Sigmoid colon (tissue), 7 donors: ENCODE measurements at regions of chr1 and their contacts with region 1.

Region 1: DNA sequence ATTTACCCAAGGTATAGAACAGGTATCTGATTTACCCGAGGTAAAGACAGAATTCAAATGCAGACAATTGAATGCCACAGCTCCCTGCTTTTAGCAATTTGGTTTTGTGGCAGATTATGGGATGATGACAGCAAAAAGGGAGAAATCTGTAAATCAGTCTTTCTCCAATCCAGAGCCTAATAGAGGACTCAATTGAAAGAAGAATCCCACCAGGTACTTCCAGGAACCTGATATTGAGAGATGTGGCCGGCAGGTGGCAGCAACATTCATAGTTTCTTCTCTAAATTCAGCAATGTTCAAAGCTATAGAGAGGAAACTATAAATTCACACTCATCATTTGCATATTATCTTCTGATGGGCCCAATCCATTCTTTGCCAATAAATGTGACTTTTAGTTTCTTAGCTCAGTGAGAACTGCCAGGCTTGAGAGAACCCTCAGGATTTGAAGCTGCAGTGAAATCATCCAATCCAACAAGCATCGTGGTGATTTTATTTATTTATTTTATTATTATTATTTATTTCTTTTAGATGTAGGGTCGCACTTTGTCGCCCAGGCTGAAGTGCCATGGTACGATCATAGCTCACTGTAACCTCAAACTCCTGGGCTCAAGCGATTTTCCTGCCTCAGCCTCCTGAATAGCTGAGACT is 9.8 kb upstream of the PHACTR4 start:
- DNase-seq: peak; percentile 75
- H3K4me3 ChIP-seq: no peak overlapping the region
- H3K27ac ChIP-seq: no peak overlapping the region
- H3K4me1 ChIP-seq: no peaks in the 10 kb centered on the region
- H3K27me3 ChIP-seq: no peaks in the 10 kb centered on the region
- CTCF ChIP-seq: peak; percentile 4 to 61 (median 43)
- EP300 ChIP-seq: no peak
- POLR2A ChIP-seq: no peak

Region 2: DNA sequence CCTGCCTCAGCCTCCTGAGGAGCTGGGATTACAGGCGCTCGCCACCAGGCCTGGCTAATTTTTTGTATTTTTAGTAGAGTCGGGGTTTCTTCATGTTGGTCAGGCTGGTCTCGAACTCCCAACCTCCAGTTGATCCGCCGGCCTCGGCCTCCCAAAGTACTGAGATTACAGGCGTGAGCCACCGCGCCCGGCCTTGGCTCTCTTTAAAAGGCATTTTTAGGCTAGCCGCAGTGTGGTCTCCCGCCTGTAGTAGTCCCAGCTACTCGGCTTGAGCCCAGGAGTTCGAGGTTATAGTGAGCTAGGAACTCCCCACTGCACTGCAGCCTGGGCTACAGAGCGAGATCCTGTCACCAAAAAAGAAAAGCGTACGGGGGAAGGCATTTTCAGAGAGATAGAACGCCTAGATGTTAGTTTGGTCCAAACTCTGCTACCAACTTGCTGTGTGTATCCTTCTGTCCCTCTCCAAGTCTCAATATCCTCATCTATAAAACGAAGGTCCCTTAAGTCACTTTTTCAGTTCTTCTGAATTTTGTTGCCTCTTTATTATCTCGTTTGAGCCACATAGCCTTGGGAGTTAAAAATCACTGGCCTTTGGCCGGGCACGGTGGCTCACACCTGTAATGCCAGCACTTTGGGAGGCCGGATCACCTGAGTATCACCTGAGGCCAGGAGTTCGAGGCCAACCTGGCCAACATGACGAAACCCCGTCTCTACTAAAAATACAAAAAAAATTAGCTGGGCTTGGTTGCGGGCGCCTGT is 30.1 kb before region 1 on chr1:
- intact Hi-C with region 1: no loop called
- DNase-seq: peak; percentile 21
- H3K4me3 ChIP-seq: peak overlapping the region; percentile 58 to 67 (median 66)
- H3K27ac ChIP-seq: peak overlapping the region; percentile 77 to 90 (median 85)
- H3K4me1 ChIP-seq: peaks cover 0 to 19% (median 8%) of the 10 kb centered on the region in 4 donors
- H3K27me3 ChIP-seq: no peaks in the 10 kb centered on the region
- CTCF ChIP-seq: peak in 2 of 4 experiments; percentile 21 to 22
- EP300 ChIP-seq: no peak
- POLR2A ChIP-seq: no peak

Region 3: GRCh38 chr1:28505406-28506187 is 145.9 kb after region 1 on chr1 and contains the start of gene RCC1:
- intact Hi-C with region 1: no loop called
- DNase-seq: peak; percentile 99
- H3K4me3 ChIP-seq: peak within 1 kb of the TSS; percentile 55 to 78 (median 71)
- H3K27ac ChIP-seq: peak within 1 kb of the TSS; percentile 77 to 93 (median 90)
- H3K4me1 ChIP-seq: peaks cover 5 to 47% (median 42%) of the 10 kb centered on the region in 4 donors
- H3K27me3 ChIP-seq: no peaks in the 10 kb centered on the region
- CTCF ChIP-seq: no peak
- EP300 ChIP-seq: peak in 1 of 4 donors; percentile 55
- POLR2A ChIP-seq: peak; percentile 93 to 94
- total RNA-seq, gene RCC1: 8.9 to 18.8 (median 10.8) TPM

Region 4: GRCh38 chr1:28602536-28603439 is 243.1 kb after region 1 on chr1:
- intact Hi-C with region 1: loop called (anchors 5 kb)
- DNase-seq: peak; percentile 75
- H3K4me3 ChIP-seq: no peak overlapping the region
- H3K27ac ChIP-seq: peak overlapping the region in 1 of 4 donors; percentile 41
- H3K4me1 ChIP-seq: peaks cover 0 to 8% (median 0%) of the 10 kb centered on the region in 4 donors
- H3K27me3 ChIP-seq: no peaks in the 10 kb centered on the region
- CTCF ChIP-seq: peak; percentile 14 to 54 (median 49)
- EP300 ChIP-seq: no peak
- POLR2A ChIP-seq: no peak

Region 5: DNA sequence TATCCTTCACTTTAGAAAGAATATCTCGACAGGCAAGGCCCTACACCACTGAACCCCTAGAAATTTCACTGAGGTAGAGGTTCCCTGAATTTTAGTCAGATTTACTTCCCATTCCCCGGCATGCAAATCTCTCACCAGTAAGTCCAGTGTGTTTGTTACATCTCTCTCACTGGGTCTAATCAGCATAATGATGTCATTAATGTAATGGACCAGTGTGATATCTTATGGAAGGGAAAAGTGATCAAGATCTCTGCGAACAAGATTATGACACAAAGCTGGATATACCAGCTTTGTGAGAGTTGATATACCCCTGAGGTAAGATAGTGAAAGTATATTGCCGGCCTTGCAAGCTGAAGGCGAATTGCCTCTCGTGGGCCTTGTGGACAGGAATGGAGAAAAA is 296.6 kb after region 1 on chr1:
- intact Hi-C with region 1: no loop called
- DNase-seq: no peak
- H3K4me3 ChIP-seq: no peak overlapping the region
- H3K27ac ChIP-seq: no peak overlapping the region
- H3K4me1 ChIP-seq: no peaks in the 10 kb centered on the region
- H3K27me3 ChIP-seq: no peaks in the 10 kb centered on the region
- CTCF ChIP-seq: no peak
- EP300 ChIP-seq: no peak
- POLR2A ChIP-seq: no peak

Region 6: DNA sequence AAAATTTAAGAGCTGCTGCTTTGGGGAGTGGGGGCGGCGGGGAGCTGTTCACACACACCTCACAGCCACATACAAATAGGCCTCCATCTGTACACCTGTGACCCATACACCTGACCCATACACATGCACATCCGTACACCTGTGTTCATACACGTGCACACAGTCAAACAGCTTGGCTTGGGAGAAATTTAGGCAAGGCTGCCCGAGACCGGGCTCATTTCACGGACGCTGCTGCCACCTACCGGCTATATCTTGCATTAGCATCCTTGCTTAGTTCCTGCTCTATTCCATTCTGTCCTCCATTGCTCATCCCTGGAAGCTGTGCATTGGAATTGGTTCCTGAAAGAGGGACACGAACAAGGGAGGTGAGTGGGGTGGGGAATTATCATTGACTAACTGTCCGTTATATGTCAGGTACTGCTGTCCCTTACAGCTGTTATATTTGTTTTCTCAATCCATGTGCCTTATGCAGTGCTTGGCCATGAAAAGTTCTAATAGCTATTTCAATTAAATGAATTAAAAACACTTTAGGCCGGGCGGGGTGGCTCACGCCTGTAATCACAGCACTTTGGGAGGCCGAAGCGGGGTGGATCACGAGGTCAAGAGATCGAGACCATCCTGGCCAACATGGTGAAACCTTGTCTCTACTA is 517.5 kb after region 1 on chr1:
- intact Hi-C with region 1: loop called (anchors 5 kb)
- DNase-seq: peak; percentile 84
- H3K4me3 ChIP-seq: no peak overlapping the region
- H3K27ac ChIP-seq: no peak overlapping the region
- H3K4me1 ChIP-seq: peaks cover 0 to 5% (median 2%) of the 10 kb centered on the region in 4 donors
- H3K27me3 ChIP-seq: no peaks in the 10 kb centered on the region
- CTCF ChIP-seq: peak; percentile 80 to 91 (median 86)
- EP300 ChIP-seq: no peak
- POLR2A ChIP-seq: no peak